ENCODE measurements at regions of chr2 and their contacts with region 1.

Region 1: DNA sequence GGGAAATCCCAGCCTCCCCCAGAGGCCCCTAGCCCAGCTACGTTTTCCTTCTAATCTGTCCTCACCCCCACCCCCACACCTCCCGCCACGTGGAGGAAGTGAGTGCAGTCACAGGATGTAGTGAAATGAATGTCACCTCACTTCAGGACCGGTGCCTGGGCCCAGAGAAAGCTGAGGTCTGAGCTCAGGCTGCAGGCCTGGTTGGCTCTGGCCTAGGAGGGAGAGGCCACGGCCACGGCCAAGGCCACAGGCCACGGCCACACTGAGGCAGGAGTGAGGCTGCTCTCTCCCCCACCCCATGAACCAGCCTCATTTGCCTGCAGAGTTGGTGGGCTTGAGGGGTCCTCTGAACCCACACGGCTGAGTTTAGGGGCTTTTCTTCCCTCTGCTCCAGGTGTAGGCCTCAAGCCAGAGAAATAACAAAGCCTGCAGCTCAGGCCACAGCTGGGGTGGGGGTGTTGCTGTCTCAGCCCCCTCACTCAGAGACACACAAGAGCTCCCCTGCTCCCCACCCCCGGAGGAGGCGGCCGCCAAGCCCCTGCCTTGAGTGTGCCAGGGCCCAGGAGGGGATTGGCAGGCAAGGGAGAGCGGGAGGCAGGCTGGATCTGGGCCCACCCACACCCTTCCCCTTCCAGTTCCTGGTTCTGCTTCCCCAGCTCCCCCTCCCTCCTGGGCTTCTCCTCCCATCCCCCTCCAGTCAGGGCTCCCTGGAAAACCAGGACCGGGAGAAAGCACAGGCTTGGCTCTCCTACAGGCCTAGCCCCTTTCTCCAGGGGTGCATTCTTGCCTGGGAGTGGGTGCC is 27.0 kb downstream of the DNMT3A start:
- DNase-seq: peak in 1 of 4 experiments; percentile 33
- ATAC-seq: no peak
- H3K4me3 ChIP-seq: no peak overlapping the region
- H3K27ac ChIP-seq: no peak overlapping the region
- H3K4me1 ChIP-seq: peaks cover 0 to 37% of the 10 kb centered on the region in 2 experiments; a peak in 2 of 5 replicates
- H3K27me3 ChIP-seq: peaks cover 16 to 35% of the 10 kb centered on the region in 2 experiments
- CTCF ChIP-seq: no peak
- EP300 ChIP-seq: no peak
- POLR2A ChIP-seq: no peak
- RAD21 ChIP-seq: no peak

Region 2: DNA sequence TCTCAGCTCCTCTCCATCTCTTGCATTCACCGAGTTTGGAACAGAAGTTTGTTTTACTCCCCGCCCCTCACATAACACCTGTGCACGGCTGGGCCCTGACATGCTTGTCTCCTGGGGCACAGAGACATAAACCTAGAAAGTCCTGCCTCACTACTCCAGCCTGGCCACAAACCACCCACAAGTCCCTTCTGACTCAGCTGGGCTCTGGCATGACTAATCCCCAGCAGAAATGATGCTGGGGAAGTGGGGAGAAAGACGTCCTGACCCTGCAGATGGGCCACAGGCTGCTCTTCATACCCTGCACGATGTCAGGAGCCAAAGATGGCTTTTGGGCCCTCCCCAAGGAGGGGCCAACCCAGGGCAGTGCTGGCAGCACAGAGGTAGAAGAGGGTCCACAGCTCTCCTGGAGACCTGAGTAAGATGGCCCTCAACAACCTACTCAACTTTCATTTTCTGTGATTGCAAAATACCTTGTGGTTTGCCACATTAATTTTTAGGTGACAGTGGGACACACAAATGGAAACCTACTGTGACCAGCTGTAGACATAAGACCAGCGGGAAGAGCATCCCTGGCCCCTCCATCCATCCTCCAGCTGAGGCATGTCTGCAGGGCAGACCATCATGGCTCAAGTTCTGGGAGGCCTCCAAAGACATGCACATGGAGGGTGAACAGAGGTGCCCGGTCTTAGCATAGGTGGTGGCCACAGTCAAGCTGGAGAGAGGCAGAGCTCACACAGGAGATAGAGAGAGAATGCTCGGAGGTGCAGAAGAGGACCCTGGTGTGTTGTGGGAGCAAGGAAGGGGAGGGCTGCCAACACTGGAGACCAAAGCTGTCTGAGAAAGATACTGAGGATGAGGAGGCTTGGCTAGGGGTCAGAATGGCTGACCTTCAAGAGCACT is 13.0 kb before region 1 on chr2:
- CTCF ChIA-PET with region 1: no interaction called
- POLR2A ChIA-PET with region 1: no interaction called
- in situ Hi-C with region 1: no loop called
- intact Hi-C with region 1: no loop called
- DNase-seq: no peak
- ATAC-seq: no peak
- H3K4me3 ChIP-seq: no peak overlapping the region
- H3K27ac ChIP-seq: no peak overlapping the region
- H3K4me1 ChIP-seq: peaks cover 0 to 9% of the 10 kb centered on the region in 2 experiments; a peak in 2 of 5 replicates
- H3K27me3 ChIP-seq: peaks cover 19 to 57% of the 10 kb centered on the region in 2 experiments
- CTCF ChIP-seq: no peak
- EP300 ChIP-seq: no peak
- POLR2A ChIP-seq: no peak
- RAD21 ChIP-seq: no peak

Region 3: DNA sequence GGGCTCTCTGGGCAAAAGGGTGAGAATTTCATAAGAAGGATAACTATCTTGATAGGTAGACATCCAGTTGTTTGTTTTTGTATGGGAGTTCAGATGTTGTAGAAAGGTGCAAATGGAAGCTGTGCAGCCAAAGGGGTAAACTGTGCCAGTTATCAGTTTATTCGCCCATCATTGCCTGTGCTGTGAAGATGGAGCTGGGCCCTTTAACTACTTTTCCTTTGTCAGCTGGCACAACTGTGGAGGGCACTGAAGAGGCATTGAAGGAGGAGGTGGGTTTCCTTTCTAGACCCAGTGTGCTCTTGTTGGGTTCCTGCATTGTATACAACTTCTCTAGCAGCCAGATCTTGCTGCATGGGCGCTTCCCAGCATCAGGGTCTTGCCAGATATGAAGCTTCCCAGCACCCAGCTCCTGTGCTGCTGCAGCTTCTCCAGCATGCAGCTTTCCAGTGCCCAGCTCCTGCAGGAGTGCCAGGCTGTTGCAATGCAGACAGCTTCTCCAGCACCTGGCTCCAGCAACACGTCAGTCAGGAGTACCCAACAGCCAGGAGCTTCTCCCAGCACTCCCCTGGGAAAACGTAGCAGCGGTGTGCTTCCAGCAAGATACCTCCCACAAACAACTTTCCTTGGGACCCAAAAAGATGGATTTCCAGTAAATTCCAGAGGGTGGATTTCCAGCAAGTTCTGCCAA is 11.8 kb after region 1 on chr2:
- CTCF ChIA-PET with region 1: no interaction called
- POLR2A ChIA-PET with region 1: interaction called, 10 read pairs
- in situ Hi-C with region 1: no loop called
- intact Hi-C with region 1: no loop called
- DNase-seq: no peak
- ATAC-seq: no peak
- H3K4me3 ChIP-seq: no peak overlapping the region
- H3K27ac ChIP-seq: no peak overlapping the region
- H3K4me1 ChIP-seq: peaks cover 0 to 3% of the 10 kb centered on the region in 2 experiments; a peak in 1 of 5 replicates
- H3K27me3 ChIP-seq: peaks cover 29 to 78% of the 10 kb centered on the region in 2 experiments
- CTCF ChIP-seq: no peak
- EP300 ChIP-seq: no peak
- POLR2A ChIP-seq: no peak
- RAD21 ChIP-seq: no peak